Posterior vena cava (tissue), 2 donors: ENCODE measurements at regions of chr11 and their contacts with region 1.

Region 1: DNA sequence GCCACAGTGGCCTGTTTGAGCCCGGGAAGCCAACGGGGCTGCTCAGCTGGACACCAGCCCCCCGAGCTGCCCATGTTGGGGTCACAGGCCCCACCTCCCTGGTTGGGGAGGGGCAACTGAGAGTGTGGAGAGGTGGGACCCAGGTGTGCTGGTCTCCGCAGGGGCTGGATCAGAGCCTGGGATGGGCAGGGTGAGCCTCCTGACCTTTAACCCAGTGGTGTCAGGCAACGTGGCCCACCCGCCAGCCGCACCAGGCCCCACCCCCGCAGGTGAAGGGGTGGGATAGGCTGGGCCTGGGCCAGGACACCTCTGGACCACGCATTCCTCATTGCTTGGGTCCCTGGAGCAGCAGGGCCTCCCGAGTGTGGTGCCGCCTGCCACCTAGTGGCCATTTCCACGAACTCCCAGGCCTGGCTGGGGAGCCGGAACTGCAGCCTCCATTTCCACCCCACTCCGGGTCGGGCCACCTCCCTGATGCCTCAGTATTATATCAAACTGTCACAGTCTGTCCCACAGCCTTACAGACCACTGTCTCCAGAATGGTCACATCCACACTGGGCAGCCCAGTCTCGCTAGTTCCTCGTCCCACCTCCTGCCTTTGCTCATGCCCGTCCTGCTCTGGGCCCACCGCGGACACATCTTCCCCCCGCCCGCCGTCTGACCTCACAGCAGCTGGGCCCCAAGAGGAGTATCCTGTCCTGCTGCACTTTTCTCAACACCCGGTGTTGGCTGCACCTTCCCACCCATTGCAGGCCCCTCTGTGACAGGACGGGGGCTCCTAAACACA is 13.3 kb upstream of the PPP6R3 start:
- DNase-seq: peak; percentile 93

Region 2: GRCh38 chr11:68257475-68258362 is 189.5 kb before region 1 on chr11:
- intact Hi-C with region 1: loop called (anchors 2 to 5 kb)
- DNase-seq: peak; percentile 99

Region 3: DNA sequence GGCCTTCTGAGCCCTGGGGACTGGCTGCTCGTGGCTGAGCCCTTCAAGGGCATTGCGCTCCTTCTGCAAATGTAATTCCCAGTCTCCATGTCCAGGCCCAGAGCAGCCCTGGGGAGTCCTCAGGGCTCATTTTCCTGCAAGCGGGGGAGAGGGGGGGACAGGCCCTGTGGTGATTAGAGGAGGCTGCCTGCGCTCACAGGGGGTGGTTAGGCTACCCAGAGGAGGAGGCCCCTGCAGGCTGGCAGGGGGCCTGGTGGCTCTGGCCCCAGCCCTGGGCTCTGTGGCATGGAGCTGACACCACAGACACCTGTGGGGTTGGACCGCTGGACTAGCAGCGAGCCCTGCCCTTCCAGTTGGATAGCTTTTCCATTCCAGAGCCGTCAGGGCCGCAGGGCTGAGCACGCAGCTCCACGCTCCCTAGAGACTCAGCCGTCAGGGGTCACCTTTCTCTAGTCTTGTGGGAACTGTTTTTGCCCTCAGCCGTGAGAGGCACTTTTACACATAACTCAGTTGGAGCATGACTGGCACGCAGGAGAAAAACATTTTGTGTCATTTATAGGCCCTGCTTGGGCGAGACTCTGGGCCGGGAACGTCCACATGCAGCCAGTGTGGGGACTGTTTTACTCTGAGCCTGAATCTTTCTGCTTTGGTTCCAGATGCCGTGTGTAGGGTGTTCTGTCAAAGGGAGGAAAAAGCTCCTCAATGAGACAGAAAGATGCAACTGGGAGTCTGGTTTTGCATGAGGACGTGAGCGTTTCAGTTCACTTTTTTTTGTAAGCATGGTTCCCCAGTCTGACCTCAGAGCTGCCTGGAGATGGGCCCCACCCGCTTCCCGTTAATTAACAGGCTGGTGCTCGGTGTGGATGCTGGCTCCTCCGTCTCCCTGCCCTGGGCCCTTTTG is 76.7 kb before region 1 on chr11:
- intact Hi-C with region 1: loop called in 1 of 2 experiments (anchors 10 kb)
- DNase-seq: no peak

Region 4: DNA sequence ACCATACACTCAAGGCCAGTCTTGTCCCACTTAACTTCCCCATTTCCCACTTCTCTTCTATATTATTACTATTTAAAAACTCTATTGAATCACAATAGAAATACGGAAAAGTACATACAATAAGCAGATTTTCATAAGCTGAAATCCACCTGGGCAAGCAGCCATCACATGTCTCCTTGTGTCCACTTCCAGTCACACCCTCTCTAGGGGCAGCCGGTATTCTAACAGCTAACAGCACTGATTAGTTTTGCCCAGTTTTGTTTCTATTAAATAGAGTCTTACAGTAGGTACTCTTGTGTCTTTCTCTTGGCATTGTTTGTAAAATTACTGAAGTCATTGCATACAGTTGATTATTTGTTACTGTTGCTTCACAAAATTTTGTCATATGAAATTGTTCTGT is 51.1 kb after region 1 on chr11:
- intact Hi-C with region 1: no loop called
- DNase-seq: no peak